ENCODE measurements at regions of chr1 and their contacts with region 1.

Region 1: GRCh38 chr1:197356723-197357533 is 88.9 kb downstream of the CRB1 start:
- DNase-seq: peak; percentile 23
- ATAC-seq: peak; percentile 44 to 59

Region 2: DNA sequence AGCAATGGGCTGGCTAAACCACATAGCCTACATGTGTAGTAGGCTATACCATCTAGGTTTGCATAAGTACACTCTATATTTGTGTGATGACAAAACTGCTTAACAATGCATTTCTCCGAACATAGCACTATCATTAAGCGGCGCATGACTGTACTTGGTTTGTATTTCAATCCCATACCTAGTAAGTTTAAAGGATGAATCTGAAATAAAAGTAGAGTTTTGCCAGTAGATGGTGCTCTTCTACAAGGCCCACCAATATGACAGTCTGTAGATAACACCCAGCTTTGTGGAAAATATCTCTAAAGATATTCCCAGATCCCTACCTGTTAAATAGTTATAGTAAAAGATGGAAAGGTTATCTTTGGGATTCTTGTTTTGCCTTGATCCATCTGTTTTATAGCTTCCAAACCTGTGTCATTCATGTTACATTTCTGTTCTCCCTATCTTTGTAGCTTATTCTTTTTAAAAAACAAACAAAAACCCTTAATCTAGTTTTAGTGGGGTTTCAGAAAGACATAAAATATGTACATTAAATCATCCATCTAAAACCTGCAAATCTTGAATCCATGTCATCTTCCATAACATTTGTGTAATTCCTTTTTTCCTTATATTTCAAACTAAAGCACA is 176.6 kb before region 1 on chr1:
- intact Hi-C with region 1: loop called in 1 of 2 experiments (anchors 1 kb)
- DNase-seq: no peak
- ATAC-seq: peak; percentile 60 to 61

Region 3: GRCh38 chr1:197268012-197268411 is 88.9 kb before region 1 on chr1 and contains the start of gene CRB1:
- intact Hi-C with region 1: no loop called
- DNase-seq: no peak
- ATAC-seq: no peak
- total RNA-seq, gene CRB1: 0.26 to 0.38 TPM

Region 4: DNA sequence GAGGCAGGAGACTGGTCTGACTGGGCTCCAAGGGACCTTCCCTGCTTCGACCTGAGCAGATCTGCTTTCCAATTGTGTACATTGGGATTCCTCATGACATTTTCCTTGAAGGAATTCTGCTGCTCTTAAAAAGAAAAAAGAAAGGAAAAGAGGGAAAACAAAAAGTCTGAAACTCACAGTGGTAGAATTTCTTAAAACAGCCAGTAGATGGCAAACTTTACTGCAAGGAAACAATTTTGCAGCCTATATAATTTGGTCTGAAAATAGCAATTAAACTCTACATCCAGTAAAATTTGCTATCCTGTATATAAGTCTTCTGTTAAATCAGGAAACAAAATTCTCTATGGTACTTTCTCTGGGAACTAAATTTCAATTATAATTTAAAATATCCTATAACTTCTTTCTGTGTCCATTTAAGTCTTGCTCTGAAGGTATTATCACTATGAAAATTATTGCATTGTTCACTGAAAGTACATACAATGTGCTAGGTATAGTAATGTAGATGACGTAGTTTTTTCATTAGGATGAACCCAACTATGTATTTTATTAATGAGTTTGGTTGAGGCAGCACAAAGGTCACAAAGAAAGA is 29.1 kb before region 1 on chr1:
- intact Hi-C with region 1: loop called in 1 of 2 experiments (anchors 2 kb)
- DNase-seq: no peak
- ATAC-seq: no peak

Measured in left cardiac atrium (tissue), 4 donors.